ENCODE measurements at regions of chr6 and their contacts with region 1.

Region 1: DNA sequence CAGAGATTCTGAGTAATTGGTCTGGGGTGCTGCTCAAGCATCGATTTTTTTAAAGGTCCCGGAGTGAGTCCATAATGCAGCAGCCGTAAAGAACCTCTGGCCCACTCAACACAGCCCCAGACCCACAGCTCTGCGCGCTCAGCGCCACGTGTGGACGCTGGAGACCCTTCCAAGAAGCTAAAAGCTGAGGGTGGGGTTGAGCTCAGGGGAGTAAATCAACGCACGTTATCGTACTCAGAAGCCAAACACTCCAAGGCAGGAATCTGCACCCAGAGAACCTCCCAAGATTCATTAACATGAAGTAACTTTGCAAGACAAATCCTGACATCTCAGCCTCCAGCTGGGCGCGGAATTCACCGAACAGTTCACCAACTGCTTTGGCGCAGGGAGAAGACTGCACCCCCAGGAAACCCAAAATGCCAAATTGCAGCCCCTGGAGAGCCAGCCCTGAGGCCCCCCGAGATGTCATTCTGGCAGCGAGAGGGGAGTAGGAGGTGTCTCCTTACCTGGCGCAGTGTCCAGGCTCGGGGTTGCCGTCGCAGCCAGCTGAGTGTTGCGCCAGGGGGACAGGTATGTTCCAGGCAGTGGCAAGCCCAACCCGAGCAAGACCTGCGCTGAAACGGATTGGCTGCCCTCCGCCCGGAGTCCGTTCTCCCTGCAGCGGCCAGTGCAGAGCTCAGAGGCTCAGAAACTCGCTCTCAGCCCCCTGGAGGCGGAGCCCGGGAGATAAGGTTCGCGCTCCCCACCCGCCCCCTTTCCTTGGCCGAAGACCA is at the start of gene COL21A1:
- DNase-seq: peak; percentile 35
- H3K4me3 ChIP-seq: peak within 1 kb of the TSS in 2 of 3 experiments; percentile 25 to 33
- H3K27ac ChIP-seq: no peak within 1 kb of the TSS
- H3K4me1 ChIP-seq: no peaks in the 10 kb centered on the region
- H3K27me3 ChIP-seq: peaks cover 3% of the 10 kb centered on the region in 2 experiments
- CTCF ChIP-seq: peak; percentile 25 to 64
- POLR2A ChIP-seq: no peak
- total RNA-seq, gene COL21A1: 1.4 TPM in 2 replicates

Region 2: DNA sequence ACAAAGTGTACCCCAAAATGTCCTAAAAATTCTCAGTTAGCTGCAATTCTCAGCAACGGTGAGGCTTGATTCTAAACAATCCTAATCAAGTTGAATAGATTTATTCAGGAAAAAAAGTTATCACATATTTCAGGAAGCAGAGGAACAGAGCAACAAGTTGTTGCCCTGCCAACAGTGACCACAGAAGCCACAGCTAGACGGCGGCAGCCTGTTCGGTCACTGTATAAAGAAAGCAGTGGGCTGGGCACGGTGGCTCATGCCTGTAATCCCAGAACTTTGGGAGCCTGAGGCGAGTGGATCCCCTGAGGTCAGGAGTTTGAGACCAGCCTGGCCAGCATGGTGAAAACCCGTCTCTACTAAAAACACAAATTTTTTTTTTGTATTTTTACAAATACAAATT is 200.5 kb before region 1 on chr6:
- CTCF ChIA-PET with region 1: no interaction called
- POLR2A ChIA-PET with region 1: no interaction called
- dilution Hi-C with region 1: no loop called
- intact Hi-C with region 1: loop called (anchors 5 kb)
- DNase-seq: peak; percentile 94
- H3K4me3 ChIP-seq: no peak overlapping the region
- H3K27ac ChIP-seq: peak overlapping the region; percentile 63
- H3K4me1 ChIP-seq: peaks cover 39% of the 10 kb centered on the region
- H3K27me3 ChIP-seq: no peaks in the 10 kb centered on the region
- CTCF ChIP-seq: no peak
- POLR2A ChIP-seq: no peak

Region 3: DNA sequence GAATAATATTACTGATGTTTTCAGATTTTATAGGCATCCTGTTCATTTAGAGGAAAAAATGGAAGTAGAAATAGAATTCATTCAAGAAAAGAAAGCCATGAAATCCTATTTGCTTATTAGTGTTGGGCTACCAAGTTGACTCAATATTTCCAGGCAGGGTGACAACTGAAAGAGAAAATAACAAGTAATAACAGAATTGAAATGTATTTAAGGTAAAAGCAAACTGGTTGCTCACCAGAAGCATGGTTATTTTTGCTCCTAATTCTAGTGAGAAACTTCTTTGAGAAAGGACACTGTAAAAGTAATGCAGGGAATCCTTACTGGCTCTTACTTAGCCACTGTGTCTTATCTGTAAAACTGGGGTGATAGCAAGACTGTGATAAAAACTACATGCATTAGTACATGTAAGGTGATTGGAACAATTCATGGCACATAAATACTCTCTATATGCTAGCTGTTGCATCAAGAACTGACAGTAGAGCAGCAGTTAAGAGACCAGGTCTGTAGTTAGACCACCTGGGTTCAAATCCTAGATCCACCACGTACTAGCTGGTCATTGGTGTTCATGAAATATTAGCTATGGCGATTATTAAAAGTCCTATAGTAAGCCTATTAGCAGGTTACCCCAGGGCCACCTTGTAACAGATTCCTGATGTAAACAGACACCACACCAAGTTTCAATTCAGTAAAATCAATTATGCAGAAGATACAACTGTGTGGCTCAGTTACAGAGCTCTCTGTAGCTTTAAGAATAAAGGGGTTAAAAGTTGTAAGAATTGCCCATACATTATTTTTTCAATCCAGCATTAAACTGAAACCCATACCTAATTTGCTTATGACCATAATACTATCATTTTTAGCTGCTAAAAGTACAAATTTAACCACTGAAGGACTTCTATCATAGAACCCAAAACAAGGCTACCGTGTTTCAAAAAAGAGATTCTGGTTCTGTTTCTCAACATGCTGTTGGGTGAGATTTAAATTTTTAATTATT is 159.5 kb after region 1 on chr6:
- CTCF ChIA-PET with region 1: no interaction called
- POLR2A ChIA-PET with region 1: no interaction called
- dilution Hi-C with region 1: no loop called
- intact Hi-C with region 1: no loop called
- DNase-seq: no peak
- H3K4me3 ChIP-seq: no peak overlapping the region
- H3K27ac ChIP-seq: no peak overlapping the region
- H3K4me1 ChIP-seq: no peaks in the 10 kb centered on the region
- H3K27me3 ChIP-seq: no peaks in the 10 kb centered on the region
- CTCF ChIP-seq: no peak
- POLR2A ChIP-seq: no peak

Region 4: DNA sequence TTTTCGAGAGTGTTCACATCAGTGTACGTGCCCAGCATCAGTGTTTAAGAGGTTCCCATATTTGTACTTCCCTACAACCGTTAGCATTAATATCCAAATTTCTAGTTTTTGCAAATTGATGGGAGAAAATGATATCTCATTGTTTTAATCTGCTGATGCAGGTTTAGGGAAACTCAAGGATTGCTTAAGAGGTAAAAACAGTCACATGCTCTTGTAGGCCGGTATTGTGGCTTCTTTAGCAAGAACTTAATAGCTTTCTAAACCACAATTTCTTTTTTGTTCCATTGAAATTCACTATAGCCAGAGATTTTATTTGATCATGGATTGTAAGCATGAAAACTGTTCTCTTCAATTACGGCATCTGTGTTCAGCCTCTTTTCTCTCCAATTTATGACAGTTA is 737.3 kb after region 1 on chr6:
- CTCF ChIA-PET with region 1: no interaction called
- POLR2A ChIA-PET with region 1: no interaction called
- dilution Hi-C with region 1: no loop called
- intact Hi-C with region 1: no loop called
- DNase-seq: no peak
- H3K4me3 ChIP-seq: no peak overlapping the region
- H3K27ac ChIP-seq: no peak overlapping the region
- H3K4me1 ChIP-seq: no peaks in the 10 kb centered on the region
- H3K27me3 ChIP-seq: peaks cover 2 to 3% of the 10 kb centered on the region in 2 experiments
- CTCF ChIP-seq: no peak
- POLR2A ChIP-seq: no peak

Measured in endothelial cell of umbilical vein (primary cell).